ENCODE measurements at regions of chr16 and their contacts with region 1.

Region 1: DNA sequence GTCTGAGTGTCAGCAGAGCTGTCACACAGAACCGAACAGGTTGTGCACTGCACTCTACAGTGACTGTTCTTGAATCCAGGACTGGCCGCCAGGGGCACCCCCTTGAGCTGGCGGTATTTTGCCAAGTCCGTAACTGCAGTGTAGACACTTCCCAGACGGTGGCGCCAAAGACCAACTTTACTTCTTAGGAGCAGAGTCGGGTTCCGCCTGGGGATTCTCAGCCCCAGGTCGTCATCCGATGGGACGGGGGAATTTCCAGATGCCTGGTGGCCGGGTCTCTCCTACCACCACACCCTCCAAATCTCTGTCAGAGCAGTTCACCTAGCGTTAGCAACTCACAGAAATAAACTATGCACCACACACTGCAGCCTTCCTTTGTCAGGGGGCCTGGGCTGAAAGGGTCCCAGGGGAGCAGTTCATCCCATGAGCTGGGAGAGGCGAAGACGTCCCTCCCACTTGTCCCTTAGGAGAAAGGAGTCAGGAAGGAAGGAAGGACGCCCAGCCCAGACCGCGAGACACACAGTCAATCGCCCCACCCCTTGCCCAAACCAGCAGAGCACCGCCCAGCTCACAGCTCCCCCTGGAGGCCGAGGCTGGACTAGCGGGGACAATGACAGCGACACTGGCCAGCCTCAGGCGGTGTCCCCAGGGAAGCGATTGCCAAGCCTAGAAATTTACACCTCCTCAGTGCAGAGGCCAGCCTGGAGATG is 7.4 kb upstream of the RIPOR1 start:
- DNase-seq: peak; percentile 98

Region 2: GRCh38 chr16:67561824-67562525 is 40.7 kb after region 1 on chr16:
- intact Hi-C with region 1: loop called (anchors 1 kb)
- DNase-seq: peak; percentile 98

Region 3: GRCh38 chr16:67645397-67646121 is 124.3 kb after region 1 on chr16:
- intact Hi-C with region 1: loop called (anchors 2 kb)
- DNase-seq: no peak

Region 4: DNA sequence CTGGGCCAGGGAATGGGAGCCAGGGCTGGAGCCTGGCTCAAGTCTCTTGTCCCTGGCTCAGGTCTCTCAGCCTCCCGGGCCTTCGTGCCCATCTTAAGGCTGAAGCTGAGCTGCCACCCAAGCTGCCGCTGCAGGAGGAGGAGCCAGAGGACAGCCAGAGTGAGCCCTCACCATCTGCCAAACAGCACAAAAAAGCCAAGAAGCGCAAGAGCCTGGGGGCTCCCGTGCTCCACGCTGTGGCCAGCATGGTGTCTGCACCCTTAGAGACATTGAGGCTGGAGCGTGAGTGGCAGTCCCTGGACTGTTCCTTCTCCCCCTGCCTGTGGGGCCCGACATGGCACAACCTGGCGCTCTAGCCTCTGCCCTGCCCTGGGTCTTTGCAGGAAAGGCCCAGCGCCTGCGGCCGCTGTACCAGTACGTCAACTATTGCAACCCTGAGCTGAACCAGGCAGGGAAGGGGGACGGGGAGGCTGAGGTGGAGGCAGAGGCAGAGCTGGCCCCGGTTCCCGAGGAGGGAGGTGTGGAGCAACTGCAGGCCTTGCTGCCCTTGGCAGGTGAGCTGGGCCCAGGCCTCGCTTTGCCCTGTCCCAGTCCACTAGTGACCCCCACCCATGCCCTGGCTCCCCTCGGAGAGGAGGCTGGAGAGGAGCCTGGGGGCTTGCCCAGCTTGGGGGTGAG is 146.7 kb after region 1 on chr16:
- intact Hi-C with region 1: loop called (anchors 1 kb)
- DNase-seq: peak; percentile 90

Region 5: DNA sequence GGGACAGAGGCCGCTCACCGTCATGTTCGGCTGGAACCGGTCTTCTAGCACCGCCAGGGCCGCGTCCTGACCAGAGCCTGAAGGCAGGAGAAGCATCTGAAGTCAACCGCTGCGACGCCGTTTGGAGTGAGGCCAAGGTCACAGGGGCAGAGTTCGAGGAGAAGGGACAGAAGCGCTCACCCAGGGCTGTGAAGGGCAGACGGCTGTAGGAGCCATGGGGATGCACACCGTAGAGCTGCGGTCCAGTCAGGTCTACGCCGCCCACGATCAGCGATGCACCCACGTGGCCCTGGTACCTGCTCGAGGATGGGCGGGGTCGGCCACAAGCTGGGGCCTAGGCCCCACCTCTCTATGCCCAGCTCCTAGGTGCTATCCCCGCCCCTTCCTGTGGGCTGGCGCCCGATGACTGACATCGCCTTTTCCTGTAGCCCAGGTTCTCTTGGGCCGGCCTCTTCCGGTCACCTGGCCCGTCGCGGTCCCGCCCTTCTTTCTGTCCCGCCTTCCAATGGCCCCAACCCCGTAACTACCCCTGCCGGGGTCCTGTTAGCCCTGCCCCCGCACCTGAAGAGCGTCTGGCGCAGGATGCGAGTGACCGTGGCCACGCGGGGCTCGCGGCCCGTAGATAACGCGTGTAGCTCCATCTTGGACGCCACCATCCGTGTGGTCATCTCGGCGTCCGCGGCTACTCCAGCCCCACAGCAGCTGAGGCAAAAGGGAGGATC is 414.3 kb after region 1 on chr16:
- intact Hi-C with region 1: loop called (anchors 10 kb)
- DNase-seq: peak; percentile 98